CD4-positive, alpha-beta memory T cell (primary cell): ENCODE measurements at regions of chr6 and their contacts with region 1.

Region 1: GRCh38 chr6:116531675-116532570 is 13.6 kb downstream of the TRAPPC3L start:
- DNase-seq: peak; percentile 65 to 73 (median 67)
- H3K4me3 ChIP-seq: no peak overlapping the region
- H3K4me3 Mint-ChIP-seq: no peak overlapping the region
- H3K27ac ChIP-seq: no peak overlapping the region
- H3K27ac Mint-ChIP-seq: no peak overlapping the region
- H3K4me1 ChIP-seq: no peaks in the 10 kb centered on the region
- H3K4me1 Mint-ChIP-seq: peaks cover 0 to 4% (median under 1%) of the 10 kb centered on the region in 4 donors
- H3K27me3 ChIP-seq: no peaks in the 10 kb centered on the region
- H3K27me3 Mint-ChIP-seq: peaks cover 14 to 17% of the 10 kb centered on the region in 2 donors

Region 2: GRCh38 chr6:116268589-116269293 is 263.2 kb before region 1 on chr6:
- CTCF ChIA-PET with region 1: interaction called, 49 read pairs
- POLR2A ChIA-PET with region 1: no interaction called
- intact Hi-C with region 1: loop called (anchors 1 kb)
- DNase-seq: peak in 4 of 5 donors; percentile 44 to 50 (median 46)
- H3K4me3 ChIP-seq: no peak overlapping the region
- H3K4me3 Mint-ChIP-seq: no peak overlapping the region
- H3K27ac ChIP-seq: no peak overlapping the region
- H3K27ac Mint-ChIP-seq: peak overlapping the region; percentile 4 to 82 (median 65)
- H3K4me1 ChIP-seq: peaks cover 25% of the 10 kb centered on the region
- H3K4me1 Mint-ChIP-seq: peaks cover 16 to 29% (median 24%) of the 10 kb centered on the region in 4 donors
- H3K27me3 ChIP-seq: no peaks in the 10 kb centered on the region
- H3K27me3 Mint-ChIP-seq: no peaks in the 10 kb centered on the region

Region 3: GRCh38 chr6:116335612-116336215 is 196.2 kb before region 1 on chr6:
- CTCF ChIA-PET with region 1: no interaction called
- POLR2A ChIA-PET with region 1: no interaction called
- intact Hi-C with region 1: no loop called
- DNase-seq: no peak
- H3K4me3 ChIP-seq: no peak overlapping the region
- H3K4me3 Mint-ChIP-seq: no peak overlapping the region
- H3K27ac ChIP-seq: no peak overlapping the region
- H3K27ac Mint-ChIP-seq: no peak overlapping the region
- H3K4me1 ChIP-seq: no peaks in the 10 kb centered on the region
- H3K4me1 Mint-ChIP-seq: no peaks in the 10 kb centered on the region
- H3K27me3 ChIP-seq: no peaks in the 10 kb centered on the region
- H3K27me3 Mint-ChIP-seq: no peaks in the 10 kb centered on the region

Region 4: GRCh38 chr6:116371120-116371917 is 160.6 kb before region 1 on chr6:
- CTCF ChIA-PET with region 1: interaction called, 3 read pairs
- POLR2A ChIA-PET with region 1: no interaction called
- intact Hi-C with region 1: loop called (anchors 10 kb)
- DNase-seq: peak; percentile 24 to 43 (median 35)
- H3K4me3 ChIP-seq: peak overlapping the region; percentile 43 to 47
- H3K4me3 Mint-ChIP-seq: peak overlapping the region; percentile 81 to 95 (median 92)
- H3K27ac ChIP-seq: peak overlapping the region; percentile 44
- H3K27ac Mint-ChIP-seq: peak overlapping the region; percentile 54 to 91 (median 77)
- H3K4me1 ChIP-seq: peaks cover 18% of the 10 kb centered on the region
- H3K4me1 Mint-ChIP-seq: peaks cover 16 to 31% (median 18%) of the 10 kb centered on the region in 4 donors
- H3K27me3 ChIP-seq: no peaks in the 10 kb centered on the region
- H3K27me3 Mint-ChIP-seq: peaks cover 4 to 8% of the 10 kb centered on the region in 2 donors

Region 5: DNA sequence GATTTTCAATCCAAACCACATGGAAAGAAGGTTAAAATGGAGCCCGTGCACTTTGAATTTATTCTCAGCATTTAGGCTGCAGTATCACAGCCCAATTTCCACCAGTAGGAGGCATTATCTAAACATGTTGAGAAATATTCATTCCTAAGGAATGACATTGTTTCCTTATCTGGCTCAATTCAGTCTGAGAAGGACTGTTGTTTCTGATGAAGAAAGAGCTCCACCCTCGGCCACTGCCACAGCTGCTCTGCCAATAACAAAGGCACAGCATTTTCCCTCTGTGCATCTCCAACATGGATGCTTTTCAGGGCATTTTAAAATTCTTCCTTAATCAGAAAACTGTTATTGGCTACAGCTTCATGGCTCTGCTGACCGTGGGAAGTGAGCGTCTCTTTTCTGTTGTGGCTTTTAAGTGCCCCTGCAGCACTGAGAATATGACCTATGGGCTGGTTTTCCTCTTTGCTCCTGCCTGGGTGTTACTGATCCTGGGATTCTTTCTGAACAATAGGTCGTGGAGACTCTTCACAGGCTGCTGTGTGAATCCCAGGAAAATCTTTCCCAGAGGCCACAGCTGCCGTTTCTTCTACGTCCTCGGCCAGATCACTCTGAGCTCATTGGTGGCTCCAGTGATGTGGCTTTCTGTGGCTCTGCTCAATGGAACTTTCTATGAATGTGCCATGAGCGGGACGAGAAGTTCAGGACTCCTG is 20.4 kb before region 1 on chr6 and contains the start of gene CALHM5:
- CTCF ChIA-PET with region 1: interaction called, 34 read pairs
- POLR2A ChIA-PET with region 1: no interaction called
- intact Hi-C with region 1: no loop called
- DNase-seq: no peak
- H3K4me3 ChIP-seq: no peak within 1 kb of the TSS
- H3K4me3 Mint-ChIP-seq: no peak within 1 kb of the TSS
- H3K27ac ChIP-seq: no peak within 1 kb of the TSS
- H3K27ac Mint-ChIP-seq: peak within 1 kb of the TSS in 2 of 7 donors; percentile 48 to 59
- H3K4me1 ChIP-seq: no peaks in the 10 kb centered on the region
- H3K4me1 Mint-ChIP-seq: no peaks in the 10 kb centered on the region
- H3K27me3 ChIP-seq: no peaks in the 10 kb centered on the region
- H3K27me3 Mint-ChIP-seq: peaks cover 4 to 6% of the 10 kb centered on the region in 2 donors
- total RNA-seq, gene CALHM5: not detected

Region 6: GRCh38 chr6:116556065-116556464 is 24.1 kb after region 1 on chr6:
- CTCF ChIA-PET with region 1: interaction called, 27 read pairs
- POLR2A ChIA-PET with region 1: no interaction called
- intact Hi-C with region 1: loop called (anchors 1 kb)
- DNase-seq: no peak
- H3K4me3 ChIP-seq: no peak overlapping the region
- H3K4me3 Mint-ChIP-seq: no peak overlapping the region
- H3K27ac ChIP-seq: no peak overlapping the region
- H3K27ac Mint-ChIP-seq: no peak overlapping the region
- H3K4me1 ChIP-seq: no peaks in the 10 kb centered on the region
- H3K4me1 Mint-ChIP-seq: no peaks in the 10 kb centered on the region
- H3K27me3 ChIP-seq: peaks cover 4% of the 10 kb centered on the region
- H3K27me3 Mint-ChIP-seq: peaks cover 8 to 19% of the 10 kb centered on the region in 2 donors

Region 7: GRCh38 chr6:116570856-116571682 is 39.1 kb after region 1 on chr6 and contains the start of gene RWDD1:
- CTCF ChIA-PET with region 1: interaction called, 16 read pairs
- POLR2A ChIA-PET with region 1: no interaction called
- intact Hi-C with region 1: no loop called
- DNase-seq: peak; percentile 98 to 99 (median 99)
- H3K4me3 ChIP-seq: peak within 1 kb of the TSS; percentile 68 to 86
- H3K4me3 Mint-ChIP-seq: peak within 1 kb of the TSS; percentile 98 to 99 (median 99)
- H3K27ac ChIP-seq: peak within 1 kb of the TSS; percentile 96
- H3K27ac Mint-ChIP-seq: peak within 1 kb of the TSS; percentile 98 to 100 (median 99)
- H3K4me1 ChIP-seq: peaks cover 44% of the 10 kb centered on the region
- H3K4me1 Mint-ChIP-seq: peaks cover 22 to 57% (median 39%) of the 10 kb centered on the region in 4 donors
- H3K27me3 ChIP-seq: no peaks in the 10 kb centered on the region
- H3K27me3 Mint-ChIP-seq: no peaks in the 10 kb centered on the region
- total RNA-seq, gene RWDD1: 32.6 to 34.4 TPM